Vagina (tissue), 2 donors: ENCODE measurements at regions of chr2 and their contacts with region 1.

Region 1: DNA sequence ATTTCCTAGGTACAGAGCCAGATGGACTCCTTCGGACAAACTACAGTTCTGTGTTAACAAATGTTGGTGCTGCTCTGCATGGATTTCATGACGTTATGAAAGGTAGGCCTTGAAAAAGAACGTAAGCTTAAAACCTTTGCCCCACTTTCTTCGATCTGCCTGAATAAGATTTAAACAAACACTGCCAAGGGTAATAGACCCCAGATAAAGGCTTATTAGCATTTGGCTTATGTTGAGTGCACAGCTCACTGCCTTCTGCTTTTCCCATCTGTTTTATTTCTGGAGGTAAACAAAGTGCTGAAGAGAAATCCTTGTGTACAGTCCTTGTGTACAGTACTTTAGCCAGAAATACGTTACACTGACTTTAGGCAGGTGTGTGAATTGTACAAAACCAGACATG is 50.0 kb upstream of the STON1 start:
- DNase-seq: no peak
- H3K4me3 ChIP-seq: no peak overlapping the region
- H3K27ac ChIP-seq: no peak overlapping the region
- H3K4me1 ChIP-seq: no peaks in the 10 kb centered on the region
- H3K27me3 ChIP-seq: no peaks in the 10 kb centered on the region
- CTCF ChIP-seq: no peak
- POLR2A ChIP-seq: no peak

Region 2: DNA sequence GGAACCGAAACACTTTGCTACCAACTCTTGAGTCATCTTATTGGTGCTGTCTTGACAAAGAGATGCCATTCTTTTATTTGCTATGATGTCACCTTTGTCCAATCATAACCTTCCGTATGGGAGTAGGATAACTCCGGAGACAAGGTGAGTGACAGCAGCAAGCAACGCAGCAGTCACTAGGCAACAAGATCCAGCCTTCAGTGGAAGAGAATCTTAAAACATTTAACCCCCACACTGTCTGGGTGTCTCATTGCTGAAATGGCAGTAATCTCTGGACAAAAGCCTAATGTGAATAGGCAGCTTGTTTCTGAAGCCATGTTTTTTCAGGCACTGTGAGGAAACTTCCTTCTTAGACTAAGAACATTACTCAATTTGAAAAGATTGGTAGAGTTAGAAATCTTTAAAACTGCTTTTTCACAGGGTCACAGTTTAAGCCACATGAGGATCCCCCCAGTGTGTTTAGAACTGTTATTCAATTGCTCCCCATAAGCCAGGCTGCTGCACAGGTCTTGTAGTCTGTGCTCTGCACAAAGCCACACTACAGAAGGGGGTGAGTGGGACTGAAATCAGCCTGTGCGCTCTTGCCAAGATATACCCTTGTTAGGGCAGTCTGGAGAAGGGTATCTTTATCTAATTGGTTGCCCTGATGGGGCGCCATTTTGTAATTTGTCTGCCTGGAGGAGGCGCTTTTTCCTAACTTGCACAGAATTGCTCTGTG is 81.5 kb before region 1 on chr2:
- intact Hi-C with region 1: no loop called
- DNase-seq: no peak
- H3K4me3 ChIP-seq: no peak overlapping the region
- H3K27ac ChIP-seq: no peak overlapping the region
- H3K4me1 ChIP-seq: no peaks in the 10 kb centered on the region
- H3K27me3 ChIP-seq: no peaks in the 10 kb centered on the region
- CTCF ChIP-seq: no peak
- POLR2A ChIP-seq: no peak

Region 3: GRCh38 chr2:48590017-48590416 is 110.1 kb after region 1 on chr2:
- intact Hi-C with region 1: loop called (anchors 5 kb)
- DNase-seq: no peak
- H3K4me3 ChIP-seq: no peak overlapping the region
- H3K27ac ChIP-seq: no peak overlapping the region
- H3K4me1 ChIP-seq: no peaks in the 10 kb centered on the region
- H3K27me3 ChIP-seq: no peaks in the 10 kb centered on the region
- CTCF ChIP-seq: no peak
- POLR2A ChIP-seq: no peak

Region 4: GRCh38 chr2:48638261-48638660 is 158.3 kb after region 1 on chr2:
- intact Hi-C with region 1: no loop called
- DNase-seq: no peak
- H3K4me3 ChIP-seq: no peak overlapping the region
- H3K27ac ChIP-seq: no peak overlapping the region
- H3K4me1 ChIP-seq: no peaks in the 10 kb centered on the region
- H3K27me3 ChIP-seq: no peaks in the 10 kb centered on the region
- CTCF ChIP-seq: no peak
- POLR2A ChIP-seq: no peak